Testis (tissue), 5 donors: ENCODE measurements at regions of chr7 and their contacts with region 1.

Region 1: DNA sequence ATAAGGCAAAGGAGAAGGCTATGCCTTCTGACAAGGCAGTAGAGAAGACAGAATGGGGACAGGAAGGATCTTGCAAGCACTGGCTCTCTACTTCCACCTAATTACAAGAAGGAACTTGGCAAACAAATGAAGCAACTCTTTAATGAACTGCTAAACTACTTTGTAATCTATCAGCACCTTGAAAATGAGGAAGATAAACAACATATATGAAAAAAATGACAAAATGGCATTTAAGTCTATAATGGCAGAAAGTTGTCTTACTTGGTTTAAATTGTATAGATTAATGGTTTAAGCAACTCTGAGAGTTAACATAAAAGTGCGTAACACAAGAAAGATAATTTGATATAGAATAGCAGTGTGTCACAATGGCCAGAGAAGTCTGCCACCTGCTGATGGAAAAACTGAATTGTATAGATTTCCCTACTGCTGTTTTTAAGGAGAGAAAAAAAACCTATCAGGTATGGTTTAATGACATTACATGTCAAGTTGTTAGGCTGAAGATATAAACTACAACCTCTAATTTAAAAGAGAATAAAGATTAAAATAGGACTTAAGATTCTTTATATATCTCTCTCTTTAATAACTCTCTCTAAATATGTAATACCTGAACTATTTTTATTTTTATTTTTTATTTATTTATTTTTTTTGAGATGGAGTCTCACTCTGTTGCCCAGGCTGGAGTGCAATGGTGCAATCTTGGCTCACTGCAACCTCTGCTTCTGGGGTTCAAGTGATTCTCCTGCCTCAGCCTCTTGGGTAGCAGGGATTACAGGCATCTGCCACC is 11.8 kb downstream of the NT5C3A start:
- DNase-seq: peak; percentile 29
- H3K4me3 ChIP-seq: no peak overlapping the region
- H3K27ac ChIP-seq: peak overlapping the region; percentile 28 to 31
- H3K4me1 ChIP-seq: peaks cover 8% of the 10 kb centered on the region
- H3K27me3 ChIP-seq: no peaks in the 10 kb centered on the region
- CTCF ChIP-seq: peak; percentile 47 to 52 (median 52)
- POLR2A ChIP-seq: no peak

Region 2: DNA sequence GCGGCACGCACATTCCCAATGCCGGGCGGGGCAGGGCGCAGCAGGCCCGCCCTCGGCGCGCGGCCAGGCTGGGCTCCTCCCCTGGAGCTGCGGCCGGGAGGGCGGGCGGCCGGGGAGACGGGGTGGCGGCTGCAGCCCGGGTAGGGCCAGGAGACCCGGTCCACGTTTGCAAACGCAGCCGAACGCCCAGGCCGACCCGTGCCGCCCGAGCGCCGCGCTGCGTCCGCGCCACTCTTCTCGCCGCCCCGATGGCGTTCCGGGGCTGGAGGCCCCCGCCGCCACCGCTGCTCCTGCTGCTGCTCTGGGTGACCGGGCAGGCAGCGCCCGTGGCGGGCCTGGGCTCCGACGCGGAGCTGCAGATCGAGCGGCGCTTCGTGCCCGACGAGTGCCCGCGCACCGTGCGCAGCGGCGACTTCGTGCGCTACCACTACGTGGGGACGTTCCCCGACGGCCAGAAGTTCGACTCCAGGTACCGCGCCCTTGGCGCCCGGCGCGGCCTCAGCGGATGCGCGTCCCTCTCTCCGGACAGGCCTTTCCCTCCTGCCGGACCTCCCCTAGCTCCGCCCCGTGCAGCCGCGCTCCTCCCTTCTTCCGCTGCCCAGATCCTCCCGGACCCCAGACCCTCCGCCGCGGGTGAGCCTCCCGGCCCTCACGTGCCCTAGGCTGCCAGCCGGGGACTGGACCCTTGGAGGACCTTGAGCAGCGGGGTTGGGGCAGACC is 93.2 kb before region 1 on chr7 and contains the start of gene FKBP9:
- intact Hi-C with region 1: loop called (anchors 10 kb)
- DNase-seq: peak; percentile 86
- H3K4me3 ChIP-seq: peak within 1 kb of the TSS; percentile 79 to 88
- H3K27ac ChIP-seq: peak within 1 kb of the TSS; percentile 72 to 77
- H3K4me1 ChIP-seq: peaks cover 6% of the 10 kb centered on the region
- H3K27me3 ChIP-seq: no peaks in the 10 kb centered on the region
- CTCF ChIP-seq: no peak
- POLR2A ChIP-seq: no peak
- total RNA-seq, gene FKBP9: 66.5 to 95.1 TPM